PC-9 (cell line): ENCODE measurements at regions of chr14 and their contacts with region 1.

Region 1: GRCh38 chr14:77172916-77173315 is 8.7 kb upstream of the TMEM63C start:
- DNase-seq: no peak
- H3K4me3 ChIP-seq: no peak overlapping the region
- H3K27ac ChIP-seq: no peak overlapping the region
- H3K4me1 ChIP-seq: no peaks in the 10 kb centered on the region
- H3K27me3 ChIP-seq: peaks cover 62% of the 10 kb centered on the region
- CTCF ChIP-seq: no peak

Region 2: GRCh38 chr14:76829650-76830421 is 343.1 kb before region 1 on chr14:
- CTCF ChIA-PET with region 1: no interaction called
- POLR2A ChIA-PET with region 1: interaction called, 37 read pairs
- intact Hi-C with region 1: no loop called
- DNase-seq: no peak
- H3K4me3 ChIP-seq: no peak overlapping the region
- H3K27ac ChIP-seq: no peak overlapping the region
- H3K4me1 ChIP-seq: no peaks in the 10 kb centered on the region
- H3K27me3 ChIP-seq: peaks cover 97% of the 10 kb centered on the region
- CTCF ChIP-seq: no peak